ENCODE measurements at regions of chr1 and their contacts with region 1.

Region 1: GRCh38 chr1:27979151-27979858 is 19.5 kb downstream of the XKR8 start:
- DNase-seq: no peak
- ATAC-seq: peak; percentile 88

Region 2: GRCh38 chr1:27858072-27858958 is 121.0 kb before region 1 on chr1:
- intact Hi-C with region 1: loop called (anchors 10 kb)
- DNase-seq: peak; percentile 74 to 90
- ATAC-seq: peak; percentile 97

Region 3: DNA sequence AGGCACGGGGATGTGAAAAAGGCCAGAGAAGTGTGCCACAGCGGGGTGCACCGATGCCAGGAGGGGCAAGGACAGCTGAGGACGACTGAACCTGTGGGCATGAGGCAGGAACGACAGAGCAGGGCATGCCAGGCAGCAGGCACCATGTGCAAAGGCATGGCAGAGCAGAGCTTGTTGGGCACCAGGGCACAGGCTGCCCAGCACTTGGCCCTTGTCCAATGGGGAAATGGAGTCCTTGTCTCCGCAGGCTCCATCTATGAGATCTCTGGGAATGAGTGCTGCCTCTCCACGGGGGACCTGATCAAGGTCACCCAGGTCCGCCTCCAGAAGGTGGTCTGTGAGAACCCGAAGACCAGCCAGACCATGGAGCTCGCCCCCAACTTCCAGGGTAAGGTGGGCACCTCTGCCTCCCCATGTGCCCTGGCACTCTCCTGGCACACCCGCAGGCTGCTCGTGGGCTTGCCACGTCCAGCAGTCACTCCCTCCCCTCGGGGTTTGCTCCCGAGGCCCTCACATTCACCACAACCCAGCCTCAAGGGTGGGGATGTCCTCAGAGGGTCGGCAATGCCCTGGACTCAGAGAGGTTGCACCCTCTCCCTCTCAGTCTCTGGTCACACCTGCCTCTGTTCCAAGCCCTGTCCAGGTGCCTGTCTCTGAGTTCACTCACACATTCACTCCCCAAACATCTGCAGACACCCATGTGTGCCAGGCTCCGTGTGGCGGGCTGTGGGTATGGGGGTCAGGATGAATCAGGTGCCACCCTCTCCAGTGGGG is 102.8 kb before region 1 on chr1:
- intact Hi-C with region 1: no loop called
- DNase-seq: no peak
- ATAC-seq: no peak

Region 4: DNA sequence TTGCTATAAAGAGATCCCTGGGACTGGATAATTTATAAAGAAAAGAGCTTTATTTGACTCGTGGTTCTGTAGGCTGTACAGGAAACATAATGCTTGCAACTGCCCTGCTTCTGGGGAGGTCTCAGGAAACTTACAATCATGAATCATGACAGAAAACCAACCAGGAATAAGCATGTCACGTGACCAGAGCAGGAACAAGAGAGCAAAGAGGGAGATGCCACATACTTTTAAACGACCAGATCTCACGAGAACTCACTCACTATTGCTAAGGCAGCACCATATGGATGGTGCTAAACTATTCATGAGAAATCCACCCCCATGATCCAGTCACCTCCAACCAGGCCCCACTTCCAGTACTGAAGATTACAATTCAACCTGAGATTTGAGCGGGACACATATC is 476.8 kb after region 1 on chr1:
- intact Hi-C with region 1: no loop called
- DNase-seq: no peak
- ATAC-seq: no peak

Measured in left colon (tissue), 2 donors.